Mammary epithelial cell (primary cell): ENCODE measurements at regions of chr9 and their contacts with region 1.

Region 1: GRCh38 chr9:84315278-84315877 is 25.2 kb downstream of the SLC28A3 start:
- DNase-seq: peak; percentile 49
- H3K4me3 ChIP-seq: no peak overlapping the region
- H3K27ac ChIP-seq: no peak overlapping the region
- H3K4me1 ChIP-seq: no peaks in the 10 kb centered on the region
- H3K27me3 ChIP-seq: no peaks in the 10 kb centered on the region
- CTCF ChIP-seq: peak; percentile 79 to 80

Region 2: GRCh38 chr9:83526901-83527300 is 788.5 kb before region 1 on chr9:
- CTCF ChIA-PET with region 1: no interaction called
- dilution Hi-C with region 1: no loop called
- in situ Hi-C with region 1: no loop called
- intact Hi-C with region 1: no loop called
- DNase-seq: no peak
- H3K4me3 ChIP-seq: no peak overlapping the region
- H3K27ac ChIP-seq: no peak overlapping the region
- H3K4me1 ChIP-seq: no peaks in the 10 kb centered on the region
- H3K27me3 ChIP-seq: no peaks in the 10 kb centered on the region
- CTCF ChIP-seq: no peak

Region 3: GRCh38 chr9:83920927-83921707 is 394.3 kb before region 1 on chr9 and contains the start of gene KIF27:
- CTCF ChIA-PET with region 1: interaction called, 4 read pairs
- dilution Hi-C with region 1: no loop called
- in situ Hi-C with region 1: no loop called
- intact Hi-C with region 1: loop called (anchors 5 kb)
- DNase-seq: peak; percentile 95
- H3K4me3 ChIP-seq: peak within 1 kb of the TSS; percentile 57 to 70 (median 64)
- H3K27ac ChIP-seq: peak within 1 kb of the TSS; percentile 77
- H3K4me1 ChIP-seq: peaks cover 7% of the 10 kb centered on the region
- H3K27me3 ChIP-seq: no peaks in the 10 kb centered on the region
- CTCF ChIP-seq: peak; percentile 10 to 32
- total RNA-seq, gene KIF27: 4.2 to 5.1 TPM

Region 4: DNA sequence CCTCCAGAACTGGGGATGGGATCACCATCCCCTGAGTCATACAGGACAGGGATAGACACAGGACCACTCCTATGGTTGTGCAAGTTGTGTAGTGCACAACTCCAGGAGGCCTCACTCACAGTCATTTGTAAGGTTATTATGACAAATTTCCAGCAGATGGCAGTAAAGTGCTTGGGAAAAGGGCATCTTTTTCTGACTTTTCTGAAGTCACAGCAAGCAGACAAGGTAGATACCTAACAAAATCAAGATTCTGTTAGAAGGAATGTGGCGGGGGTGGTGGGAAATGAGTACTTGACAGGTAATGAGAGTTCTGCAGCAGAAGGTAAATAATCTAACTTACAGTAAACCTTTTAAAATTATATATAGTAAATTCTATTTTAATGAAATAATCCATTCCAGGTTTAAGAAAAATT is 377.5 kb before region 1 on chr9:
- CTCF ChIA-PET with region 1: no interaction called
- dilution Hi-C with region 1: no loop called
- in situ Hi-C with region 1: loop called in 1 of 2 experiments (anchors 10 kb)
- intact Hi-C with region 1: loop called (anchors 1 kb)
- DNase-seq: peak; percentile 61
- H3K4me3 ChIP-seq: no peak overlapping the region
- H3K27ac ChIP-seq: no peak overlapping the region
- H3K4me1 ChIP-seq: peaks cover 32% of the 10 kb centered on the region
- H3K27me3 ChIP-seq: no peaks in the 10 kb centered on the region
- CTCF ChIP-seq: peak; percentile 55 to 65

Region 5: GRCh38 chr9:83980395-83981125 is 334.8 kb before region 1 on chr9 and contains the start of gene RMI1:
- CTCF ChIA-PET with region 1: no interaction called
- dilution Hi-C with region 1: no loop called
- in situ Hi-C with region 1: no loop called
- intact Hi-C with region 1: loop called (anchors 2 kb)
- DNase-seq: peak; percentile 96
- H3K4me3 ChIP-seq: peak within 1 kb of the TSS; percentile 84 to 94 (median 84)
- H3K27ac ChIP-seq: peak within 1 kb of the TSS; percentile 97
- H3K4me1 ChIP-seq: no peaks in the 10 kb centered on the region
- H3K27me3 ChIP-seq: no peaks in the 10 kb centered on the region
- CTCF ChIP-seq: peak in 1 of 2 donors; percentile 28
- total RNA-seq, gene RMI1: 3.7 to 12.1 TPM

Region 6: GRCh38 chr9:84170521-84171141 is 144.7 kb before region 1 on chr9:
- CTCF ChIA-PET with region 1: no interaction called
- dilution Hi-C with region 1: no loop called
- in situ Hi-C with region 1: no loop called
- intact Hi-C with region 1: loop called (anchors 5 kb)
- DNase-seq: peak; percentile 48
- H3K4me3 ChIP-seq: no peak overlapping the region
- H3K27ac ChIP-seq: peak overlapping the region; percentile 54
- H3K4me1 ChIP-seq: peaks cover 15% of the 10 kb centered on the region
- H3K27me3 ChIP-seq: no peaks in the 10 kb centered on the region
- CTCF ChIP-seq: no peak

Region 7: DNA sequence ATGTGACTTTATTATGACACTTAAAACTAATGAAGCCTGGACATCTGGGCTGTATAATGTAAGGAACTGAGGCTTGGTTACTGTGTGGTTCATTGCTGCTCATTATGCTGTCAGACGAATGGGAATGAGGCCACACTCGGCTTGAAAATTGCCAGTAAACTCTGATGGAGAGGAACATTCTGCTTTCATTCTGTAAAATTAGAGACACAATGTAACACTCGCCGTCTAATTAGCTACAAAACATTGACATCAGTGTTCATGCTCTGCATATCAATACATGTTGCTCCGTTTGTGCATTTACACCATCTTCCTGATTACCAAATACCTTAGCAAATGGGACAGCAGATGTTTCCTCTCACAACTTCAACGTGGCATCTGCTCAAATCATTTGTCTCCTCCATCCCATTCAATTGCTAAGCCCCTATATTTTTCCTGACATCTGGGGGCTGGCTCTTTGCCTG is 107.9 kb before region 1 on chr9:
- CTCF ChIA-PET with region 1: no interaction called
- dilution Hi-C with region 1: no loop called
- in situ Hi-C with region 1: no loop called
- intact Hi-C with region 1: no loop called
- DNase-seq: no peak
- H3K4me3 ChIP-seq: no peak overlapping the region
- H3K27ac ChIP-seq: no peak overlapping the region
- H3K4me1 ChIP-seq: peaks cover 2% of the 10 kb centered on the region
- H3K27me3 ChIP-seq: peaks cover 2% of the 10 kb centered on the region
- CTCF ChIP-seq: no peak

Region 8: DNA sequence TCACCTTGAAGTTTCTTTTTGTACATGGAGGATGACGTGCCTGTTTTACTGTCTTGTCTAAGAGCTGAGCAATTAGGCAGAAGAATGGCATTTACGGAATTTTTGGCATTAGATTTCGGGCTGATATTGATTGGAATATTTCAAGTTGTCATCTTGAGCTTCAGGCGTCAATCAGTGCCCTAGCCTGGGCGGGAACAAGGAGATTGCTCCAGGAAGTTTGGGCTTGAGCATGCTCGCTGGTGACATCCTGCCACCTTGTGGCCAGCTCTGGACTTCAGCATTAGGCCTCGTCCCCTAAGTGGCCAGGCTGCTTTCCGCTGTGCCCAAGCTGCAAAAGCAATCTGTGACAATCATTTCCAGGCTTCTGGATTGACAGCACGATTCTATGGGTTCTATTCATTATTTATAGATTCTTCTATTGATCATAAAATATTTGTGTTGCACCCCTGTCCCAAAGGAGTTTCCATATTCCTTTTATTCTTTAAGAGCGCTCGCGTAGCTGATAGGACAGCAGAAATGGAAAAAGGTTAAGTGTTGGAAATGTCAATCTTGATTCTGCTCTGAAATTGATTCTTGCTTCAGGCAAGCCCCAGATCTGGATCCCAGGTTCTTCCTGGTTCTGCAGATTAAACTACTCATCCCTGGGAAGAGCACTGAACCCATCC is 54.2 kb before region 1 on chr9:
- CTCF ChIA-PET with region 1: no interaction called
- dilution Hi-C with region 1: loop called (anchors 5 kb)
- in situ Hi-C with region 1: loop called in 1 of 2 experiments (anchors 10 kb)
- intact Hi-C with region 1: loop called (anchors 1 kb)
- DNase-seq: peak; percentile 55
- H3K4me3 ChIP-seq: no peak overlapping the region
- H3K27ac ChIP-seq: no peak overlapping the region
- H3K4me1 ChIP-seq: no peaks in the 10 kb centered on the region
- H3K27me3 ChIP-seq: no peaks in the 10 kb centered on the region
- CTCF ChIP-seq: peak; percentile 95 to 96

Region 9: DNA sequence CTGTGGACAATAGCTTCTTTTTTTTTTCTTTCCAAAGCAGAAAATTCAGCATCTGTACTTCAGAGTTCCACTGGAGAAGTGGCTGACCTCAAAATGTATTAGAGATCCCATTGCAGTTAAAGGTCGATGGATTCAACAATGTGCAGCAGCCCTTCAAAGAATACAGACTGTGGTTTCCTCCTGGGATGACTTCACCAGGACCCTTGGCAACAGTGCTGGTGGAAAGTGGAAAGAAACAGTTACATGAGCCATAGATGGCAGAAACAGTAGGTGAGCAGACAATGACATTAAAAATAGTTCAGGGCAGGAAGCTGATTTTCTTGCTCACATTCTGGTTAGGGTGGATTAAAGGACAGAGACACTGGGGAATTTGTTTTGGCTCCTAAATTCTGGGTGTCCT is 37.2 kb before region 1 on chr9:
- CTCF ChIA-PET with region 1: no interaction called
- dilution Hi-C with region 1: no loop called
- in situ Hi-C with region 1: no loop called
- intact Hi-C with region 1: loop called (anchors 5 kb)
- DNase-seq: peak; percentile 57
- H3K4me3 ChIP-seq: no peak overlapping the region
- H3K27ac ChIP-seq: peak overlapping the region; percentile 4
- H3K4me1 ChIP-seq: peaks cover 18% of the 10 kb centered on the region
- H3K27me3 ChIP-seq: no peaks in the 10 kb centered on the region
- CTCF ChIP-seq: no peak